ENCODE measurements at regions of chr4 and their contacts with region 1.

Region 1: GRCh38 chr4:82123934-82124333 is 249.9 kb downstream of the HNRNPD start:
- DNase-seq: peak in 7 of 14 experiments; percentile 6 to 60 (median 41)
- ATAC-seq: peak; percentile 70
- H3K4me3 ChIP-seq: no peak overlapping the region
- H3K4me3 Mint-ChIP-seq: no peak overlapping the region
- H3K27ac ChIP-seq: no peak overlapping the region
- H3K27ac Mint-ChIP-seq: no peak overlapping the region
- H3K4me1 ChIP-seq: peaks cover 6% of the 10 kb centered on the region
- H3K4me1 Mint-ChIP-seq: peaks cover 16% of the 10 kb centered on the region
- H3K27me3 ChIP-seq: no peaks in the 10 kb centered on the region
- H3K27me3 Mint-ChIP-seq: no peaks in the 10 kb centered on the region
- CTCF ChIP-seq: peak; percentile 65

Region 2: GRCh38 chr4:82201805-82202641 is 78.1 kb after region 1 on chr4:
- CTCF ChIA-PET with region 1: no interaction called
- POLR2A ChIA-PET with region 1: interaction called, 4 read pairs
- intact Hi-C with region 1: loop called (anchors 2 to 5 kb)
- DNase-seq: peak in 13 of 14 experiments; percentile 5 to 72 (median 34)
- ATAC-seq: peak; percentile 65
- H3K4me3 ChIP-seq: no peak overlapping the region
- H3K4me3 Mint-ChIP-seq: no peak overlapping the region
- H3K27ac ChIP-seq: no peak overlapping the region
- H3K27ac Mint-ChIP-seq: no peak overlapping the region
- H3K4me1 ChIP-seq: peaks cover 5% of the 10 kb centered on the region
- H3K4me1 Mint-ChIP-seq: peaks cover 10% of the 10 kb centered on the region
- H3K27me3 ChIP-seq: no peaks in the 10 kb centered on the region
- H3K27me3 Mint-ChIP-seq: peaks cover 8% of the 10 kb centered on the region
- CTCF ChIP-seq: peak; percentile 62

Region 3: GRCh38 chr4:82217986-82218715 is 94.2 kb after region 1 on chr4:
- CTCF ChIA-PET with region 1: no interaction called
- POLR2A ChIA-PET with region 1: interaction called, 3 read pairs
- intact Hi-C with region 1: loop called (anchors 1 to 5 kb)
- DNase-seq: peak in 4 of 14 experiments; percentile 24 to 42 (median 38)
- ATAC-seq: no peak
- H3K4me3 ChIP-seq: no peak overlapping the region
- H3K4me3 Mint-ChIP-seq: no peak overlapping the region
- H3K27ac ChIP-seq: no peak overlapping the region
- H3K27ac Mint-ChIP-seq: no peak overlapping the region
- H3K4me1 ChIP-seq: peaks cover 6% of the 10 kb centered on the region
- H3K4me1 Mint-ChIP-seq: peaks cover 36% of the 10 kb centered on the region
- H3K27me3 ChIP-seq: no peaks in the 10 kb centered on the region
- H3K27me3 Mint-ChIP-seq: no peaks in the 10 kb centered on the region
- CTCF ChIP-seq: peak; percentile 53

Region 4: DNA sequence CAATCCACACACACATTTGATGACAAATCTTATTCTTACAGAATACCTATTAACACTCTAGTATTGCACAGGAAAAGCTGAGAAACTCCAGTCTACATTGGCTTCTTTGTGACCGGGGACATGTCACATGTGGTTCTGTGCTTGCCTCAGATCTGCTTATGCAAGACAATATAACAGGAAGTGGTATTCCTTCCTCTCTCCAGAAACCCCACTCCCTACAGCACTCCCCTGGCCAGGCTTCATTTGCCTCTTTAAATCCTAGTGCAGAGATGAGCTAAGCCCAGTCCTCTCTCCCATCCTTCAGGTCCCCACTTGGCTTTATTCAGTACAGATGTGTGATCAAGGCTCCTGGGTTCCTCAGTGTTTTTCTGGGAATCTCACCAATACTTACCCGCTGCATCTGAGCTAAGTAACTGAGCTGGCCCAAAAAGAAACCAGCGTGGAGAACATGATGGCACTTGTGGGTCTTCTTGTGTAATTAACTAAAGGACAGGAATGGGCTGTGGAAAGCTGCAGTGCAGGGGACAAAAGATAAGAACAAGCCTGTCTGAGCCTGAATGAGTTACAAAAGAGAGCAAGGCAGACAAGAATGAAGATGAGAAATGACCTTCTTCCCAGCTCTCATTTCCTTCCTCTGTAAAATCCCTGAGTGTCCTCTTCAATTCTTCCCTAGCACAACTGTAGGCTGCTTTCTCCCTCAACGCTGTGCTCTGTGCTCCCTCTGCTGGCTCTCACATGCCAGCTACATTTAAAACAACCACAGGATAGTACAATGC is 144.3 kb after region 1 on chr4:
- CTCF ChIA-PET with region 1: no interaction called
- POLR2A ChIA-PET with region 1: no interaction called
- intact Hi-C with region 1: loop called (anchors 1 to 2 kb)
- DNase-seq: peak in 12 of 14 experiments; percentile 12 to 76 (median 34)
- ATAC-seq: peak; percentile 92
- H3K4me3 ChIP-seq: no peak overlapping the region
- H3K4me3 Mint-ChIP-seq: peak overlapping the region; percentile 70
- H3K27ac ChIP-seq: no peak overlapping the region
- H3K27ac Mint-ChIP-seq: peak overlapping the region; percentile 11
- H3K4me1 ChIP-seq: peaks cover 18% of the 10 kb centered on the region
- H3K4me1 Mint-ChIP-seq: peaks cover 34% of the 10 kb centered on the region
- H3K27me3 ChIP-seq: no peaks in the 10 kb centered on the region
- H3K27me3 Mint-ChIP-seq: no peaks in the 10 kb centered on the region
- CTCF ChIP-seq: peak; percentile 91

Region 5: DNA sequence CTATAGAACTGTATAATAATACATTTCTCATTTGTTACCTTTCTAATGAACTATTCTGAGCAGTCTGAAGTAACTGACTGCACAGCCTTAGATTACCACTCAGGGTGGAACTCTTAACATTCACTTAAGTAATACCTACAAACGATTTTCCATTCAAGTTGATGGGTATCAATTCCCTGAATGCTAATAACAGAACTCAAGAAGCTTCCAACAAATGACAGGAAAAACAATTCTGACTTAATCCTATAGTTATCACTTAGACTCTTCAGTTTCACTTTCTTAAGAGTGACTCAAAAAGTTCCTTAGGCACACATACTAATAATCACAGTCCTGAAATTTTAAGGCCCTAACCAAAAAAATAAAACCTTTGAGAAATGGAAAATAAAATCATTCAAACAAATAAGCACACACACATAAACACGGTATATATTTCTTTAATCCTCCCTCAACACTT is 229.0 kb after region 1 on chr4:
- CTCF ChIA-PET with region 1: no interaction called
- POLR2A ChIA-PET with region 1: no interaction called
- intact Hi-C with region 1: loop called in 1 of 2 experiments (anchors 5 kb)
- DNase-seq: no peak
- ATAC-seq: peak; percentile 17
- H3K4me3 ChIP-seq: no peak overlapping the region
- H3K4me3 Mint-ChIP-seq: no peak overlapping the region
- H3K27ac ChIP-seq: no peak overlapping the region
- H3K27ac Mint-ChIP-seq: peak overlapping the region; percentile 77
- H3K4me1 ChIP-seq: peaks cover 4% of the 10 kb centered on the region
- H3K4me1 Mint-ChIP-seq: peaks cover 61% of the 10 kb centered on the region
- H3K27me3 ChIP-seq: no peaks in the 10 kb centered on the region
- H3K27me3 Mint-ChIP-seq: no peaks in the 10 kb centered on the region
- CTCF ChIP-seq: no peak

Region 6: GRCh38 chr4:82360298-82361177 is 236.6 kb after region 1 on chr4:
- CTCF ChIA-PET with region 1: no interaction called
- POLR2A ChIA-PET with region 1: no interaction called
- intact Hi-C with region 1: loop called in 1 of 2 experiments (anchors 1 kb)
- DNase-seq: peak in 3 of 14 experiments; percentile 50 to 61 (median 61)
- ATAC-seq: peak; percentile 80
- H3K4me3 ChIP-seq: no peak overlapping the region
- H3K4me3 Mint-ChIP-seq: peak overlapping the region; percentile 36
- H3K27ac ChIP-seq: peak overlapping the region in 1 of 2 donors; percentile 7
- H3K27ac Mint-ChIP-seq: peak overlapping the region; percentile 60
- H3K4me1 ChIP-seq: peaks cover 25% of the 10 kb centered on the region
- H3K4me1 Mint-ChIP-seq: peaks cover 96% of the 10 kb centered on the region
- H3K27me3 ChIP-seq: peaks cover 0 to 2% of the 10 kb centered on the region in 2 experiments
- H3K27me3 Mint-ChIP-seq: no peaks in the 10 kb centered on the region
- CTCF ChIP-seq: peak; percentile 72

Measured in CD4-positive, alpha-beta T cell (primary cell).